OCI-LY7 (cell line): ENCODE measurements at regions of chr1 and their contacts with region 1.

Region 1: GRCh38 chr1:46003315-46003714 is 129.1 kb downstream of the PIK3R3 start:
- DNase-seq: no peak
- H3K4me3 ChIP-seq: no peak overlapping the region
- H3K27ac ChIP-seq: no peak overlapping the region
- H3K4me1 ChIP-seq: no peaks in the 10 kb centered on the region
- CTCF ChIP-seq: no peak

Region 2: DNA sequence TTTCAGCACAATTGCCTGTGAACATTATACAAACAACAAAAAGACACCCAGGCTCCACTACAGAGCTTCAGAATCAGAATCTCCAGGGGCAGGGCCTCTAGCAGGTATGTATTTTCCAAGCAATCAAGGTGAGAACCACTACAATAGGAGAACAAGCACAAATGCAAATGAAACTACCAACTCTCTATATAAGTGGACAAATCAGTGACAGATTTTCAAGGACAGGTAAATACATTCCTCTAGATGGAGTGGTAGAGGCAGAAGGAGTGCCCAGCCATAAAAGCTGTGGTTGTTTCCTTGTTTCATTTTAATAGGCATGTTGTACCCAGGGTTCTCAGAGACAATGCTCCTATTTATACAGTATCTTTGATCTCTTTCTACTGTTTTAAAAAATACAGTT is 359.3 kb before region 1 on chr1:
- CTCF ChIA-PET with region 1: no interaction called
- POLR2A ChIA-PET with region 1: no interaction called
- intact Hi-C with region 1: loop called (anchors 10 kb)
- DNase-seq: peak; percentile 44
- H3K4me3 ChIP-seq: no peak overlapping the region
- H3K27ac ChIP-seq: peak overlapping the region; percentile 74
- H3K4me1 ChIP-seq: peaks cover 36% of the 10 kb centered on the region
- CTCF ChIP-seq: peak; percentile 67

Region 3: DNA sequence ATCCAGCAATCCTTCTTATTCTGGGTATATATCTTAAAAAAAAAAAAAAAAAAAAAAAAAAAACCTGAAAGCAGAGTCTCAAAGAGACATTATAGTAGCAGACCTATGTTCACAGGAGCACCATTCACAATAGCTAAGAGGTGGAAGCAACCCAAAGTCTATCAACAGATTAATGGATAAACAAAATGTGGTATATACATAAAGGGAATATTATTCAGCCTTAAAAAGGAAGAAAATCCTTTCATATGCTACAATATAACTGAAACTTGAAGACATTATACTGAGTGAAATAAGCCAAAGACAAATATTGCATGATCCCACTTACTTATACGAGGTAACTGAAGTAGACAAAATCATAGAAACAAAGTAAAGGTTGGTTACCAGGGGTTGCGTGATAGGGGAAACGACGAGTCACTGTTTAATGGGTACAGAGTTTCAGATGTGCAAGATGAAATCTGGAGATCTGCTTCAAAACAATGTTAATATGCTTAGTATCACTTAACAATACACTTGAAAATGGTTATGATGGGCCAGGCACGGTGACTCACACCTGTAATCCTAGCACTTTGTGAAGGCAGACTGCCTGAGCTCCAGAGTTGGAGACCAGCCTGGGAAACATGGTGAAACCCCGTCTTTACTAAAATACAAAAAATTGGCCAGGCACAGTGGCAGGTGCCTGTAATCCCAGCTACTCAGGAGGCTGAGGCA is 99.6 kb after region 1 on chr1:
- CTCF ChIA-PET with region 1: no interaction called
- POLR2A ChIA-PET with region 1: no interaction called
- intact Hi-C with region 1: no loop called
- DNase-seq: no peak
- H3K4me3 ChIP-seq: no peak overlapping the region
- H3K27ac ChIP-seq: no peak overlapping the region
- H3K4me1 ChIP-seq: peaks cover 3% of the 10 kb centered on the region
- CTCF ChIP-seq: no peak